ENCODE measurements at regions of chr3 and their contacts with region 1.

Region 1: GRCh38 chr3:3200632-3201212 is 21.2 kb upstream of the CRBN start:
- H3K4me3 Mint-ChIP-seq: no peak overlapping the region
- H3K27ac Mint-ChIP-seq: no peak overlapping the region
- H3K4me1 Mint-ChIP-seq: no peaks in the 10 kb centered on the region
- H3K27me3 Mint-ChIP-seq: peaks cover 5% of the 10 kb centered on the region

Region 2: GRCh38 chr3:3027976-3028567 is 172.7 kb before region 1 on chr3:
- intact Hi-C with region 1: no loop called
- H3K4me3 Mint-ChIP-seq: no peak overlapping the region
- H3K27ac Mint-ChIP-seq: no peak overlapping the region
- H3K4me1 Mint-ChIP-seq: no peaks in the 10 kb centered on the region
- H3K27me3 Mint-ChIP-seq: no peaks in the 10 kb centered on the region

Region 3: DNA sequence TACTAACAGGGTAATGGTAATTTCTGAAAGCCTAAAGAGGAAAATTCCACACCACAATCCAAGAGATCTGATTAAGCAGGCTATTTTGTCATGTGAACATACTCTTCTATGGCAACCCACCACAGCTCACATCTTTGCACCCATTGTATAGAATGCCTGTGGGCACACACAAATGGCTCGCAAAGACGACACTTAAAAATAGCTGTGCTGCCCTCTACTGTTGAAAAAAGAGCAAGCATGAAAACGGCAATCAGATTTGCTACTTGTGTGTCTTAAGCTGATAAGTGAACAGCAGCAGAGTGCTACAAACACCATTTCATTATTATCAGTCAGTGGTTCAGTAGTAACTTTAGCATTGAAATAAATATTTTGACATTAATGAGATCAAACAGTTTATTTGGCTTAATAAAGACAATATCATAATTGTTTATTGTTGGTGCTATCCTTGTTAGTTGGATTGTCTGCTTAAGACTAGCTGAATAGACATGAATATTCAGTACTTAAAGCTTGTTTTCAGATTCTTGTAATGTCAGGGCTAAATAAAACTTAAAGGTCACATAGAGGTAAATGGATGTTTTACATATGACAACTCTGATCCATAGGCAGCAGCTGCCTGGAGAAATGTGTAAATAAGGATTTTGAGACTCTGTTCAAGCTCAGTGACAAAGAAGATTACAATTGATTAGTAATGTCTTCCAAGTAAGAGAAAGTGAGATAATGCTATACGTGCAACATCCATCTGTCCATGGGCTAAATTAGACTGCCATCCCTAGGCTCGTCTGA is 797.6 kb after region 1 on chr3:
- intact Hi-C with region 1: loop called (anchors 1 kb)
- H3K4me3 Mint-ChIP-seq: no peak overlapping the region
- H3K27ac Mint-ChIP-seq: no peak overlapping the region
- H3K4me1 Mint-ChIP-seq: no peaks in the 10 kb centered on the region
- H3K27me3 Mint-ChIP-seq: no peaks in the 10 kb centered on the region

Region 4: DNA sequence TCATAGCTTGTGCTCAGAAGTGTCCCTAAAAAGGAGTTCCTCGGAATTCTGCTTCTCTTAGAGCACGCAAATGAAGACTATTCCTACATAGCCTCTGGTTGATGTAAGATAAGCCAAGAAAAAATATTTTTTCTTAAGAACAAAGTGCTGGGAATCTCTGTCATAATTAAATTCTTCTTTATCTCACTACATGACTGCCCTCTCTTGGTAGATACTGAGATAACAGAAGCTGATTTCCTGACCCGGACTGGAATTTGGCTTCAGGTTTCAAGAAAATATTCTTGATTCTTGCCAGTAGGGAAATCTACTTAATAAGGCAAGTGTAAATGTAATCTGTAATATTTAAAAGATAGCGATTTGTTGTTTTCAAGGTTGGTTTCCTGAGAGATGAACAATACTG is 1071.1 kb after region 1 on chr3:
- intact Hi-C with region 1: loop called (anchors 5 kb)
- H3K4me3 Mint-ChIP-seq: no peak overlapping the region
- H3K27ac Mint-ChIP-seq: no peak overlapping the region
- H3K4me1 Mint-ChIP-seq: peaks cover 6% of the 10 kb centered on the region
- H3K27me3 Mint-ChIP-seq: no peaks in the 10 kb centered on the region

Region 5: DNA sequence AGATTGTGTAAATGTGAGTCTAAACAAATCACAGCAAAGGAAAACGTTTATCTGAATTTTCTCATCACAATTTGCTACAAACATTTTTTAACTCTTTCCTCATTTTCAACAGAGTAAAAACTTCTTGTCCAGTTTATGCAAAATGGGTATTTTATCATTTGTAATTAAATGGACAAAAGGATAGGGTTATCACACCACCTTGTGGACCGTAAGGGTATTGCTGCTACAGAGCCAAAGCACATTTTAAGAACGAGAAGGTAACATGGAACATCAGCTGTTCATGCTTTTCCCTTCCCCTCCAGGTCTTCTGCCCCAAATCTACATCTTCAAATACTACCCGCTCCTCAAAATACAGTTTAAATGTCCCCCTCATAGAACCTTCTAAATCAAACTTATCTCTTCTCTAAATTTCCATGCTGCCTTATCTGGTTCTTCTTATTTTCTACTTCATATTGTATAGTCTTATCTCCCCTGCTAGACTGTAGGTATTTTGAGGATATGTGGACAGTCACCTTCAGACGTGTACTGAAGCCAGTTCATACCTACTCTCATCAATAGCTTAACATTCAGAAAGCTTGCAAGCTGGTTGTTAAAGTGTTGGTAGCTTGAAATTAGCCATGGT is 1089.7 kb after region 1 on chr3:
- intact Hi-C with region 1: loop called (anchors 1 kb)
- H3K4me3 Mint-ChIP-seq: no peak overlapping the region
- H3K27ac Mint-ChIP-seq: no peak overlapping the region
- H3K4me1 Mint-ChIP-seq: peaks cover 10% of the 10 kb centered on the region
- H3K27me3 Mint-ChIP-seq: no peaks in the 10 kb centered on the region